GM12878 (cell line): ENCODE measurements at regions of chr1 and their contacts with region 1.

Region 1: GRCh38 chr1:36516372-36517325 is 33.9 kb upstream of the CSF3R start:
- DNase-seq: no peak
- ATAC-seq: peak; percentile 92
- H3K4me3 ChIP-seq: no peak overlapping the region
- H3K27ac ChIP-seq: no peak overlapping the region
- H3K4me1 ChIP-seq: no peaks in the 10 kb centered on the region
- H3K27me3 ChIP-seq: peaks cover 0 to 4% of the 10 kb centered on the region in 2 experiments; a peak in 3 of 4 replicates
- CTCF ChIP-seq: peak; percentile 81 to 87 (median 86)
- EP300 ChIP-seq: no peak
- POLR2A ChIP-seq: no peak
- RAD21 ChIP-seq: peak; percentile 78

Region 2: GRCh38 chr1:36457691-36458090 is 59.0 kb before region 1 on chr1:
- CTCF ChIA-PET with region 1: no interaction called
- POLR2A ChIA-PET with region 1: no interaction called
- RAD21 ChIA-PET with region 1: no interaction called
- SMC1A ChIA-PET with region 1: no interaction called
- in situ Hi-C with region 1: no loop called
- intact Hi-C with region 1: no loop called
- DNase-seq: no peak
- ATAC-seq: no peak
- H3K4me3 ChIP-seq: no peak overlapping the region
- H3K27ac ChIP-seq: peak overlapping the region; percentile 4; the same call in 1 of the 2 replicates
- H3K4me1 ChIP-seq: peaks cover 8% of the 10 kb centered on the region
- H3K27me3 ChIP-seq: no peaks in the 10 kb centered on the region
- CTCF ChIP-seq: no peak
- EP300 ChIP-seq: no peak
- POLR2A ChIP-seq: no peak
- RAD21 ChIP-seq: no peak

Region 3: GRCh38 chr1:36534711-36535412 is 18.2 kb after region 1 on chr1:
- CTCF ChIA-PET with region 1: interaction called, 19 read pairs
- POLR2A ChIA-PET with region 1: no interaction called
- RAD21 ChIA-PET with region 1: no interaction called
- SMC1A ChIA-PET with region 1: no interaction called
- in situ Hi-C with region 1: no loop called
- intact Hi-C with region 1: no loop called
- DNase-seq: no peak
- ATAC-seq: no peak
- H3K4me3 ChIP-seq: no peak overlapping the region
- H3K27ac ChIP-seq: no peak overlapping the region
- H3K4me1 ChIP-seq: no peaks in the 10 kb centered on the region
- H3K27me3 ChIP-seq: no peaks in the 10 kb centered on the region
- CTCF ChIP-seq: no peak
- EP300 ChIP-seq: no peak
- POLR2A ChIP-seq: no peak
- RAD21 ChIP-seq: no peak

Region 4: DNA sequence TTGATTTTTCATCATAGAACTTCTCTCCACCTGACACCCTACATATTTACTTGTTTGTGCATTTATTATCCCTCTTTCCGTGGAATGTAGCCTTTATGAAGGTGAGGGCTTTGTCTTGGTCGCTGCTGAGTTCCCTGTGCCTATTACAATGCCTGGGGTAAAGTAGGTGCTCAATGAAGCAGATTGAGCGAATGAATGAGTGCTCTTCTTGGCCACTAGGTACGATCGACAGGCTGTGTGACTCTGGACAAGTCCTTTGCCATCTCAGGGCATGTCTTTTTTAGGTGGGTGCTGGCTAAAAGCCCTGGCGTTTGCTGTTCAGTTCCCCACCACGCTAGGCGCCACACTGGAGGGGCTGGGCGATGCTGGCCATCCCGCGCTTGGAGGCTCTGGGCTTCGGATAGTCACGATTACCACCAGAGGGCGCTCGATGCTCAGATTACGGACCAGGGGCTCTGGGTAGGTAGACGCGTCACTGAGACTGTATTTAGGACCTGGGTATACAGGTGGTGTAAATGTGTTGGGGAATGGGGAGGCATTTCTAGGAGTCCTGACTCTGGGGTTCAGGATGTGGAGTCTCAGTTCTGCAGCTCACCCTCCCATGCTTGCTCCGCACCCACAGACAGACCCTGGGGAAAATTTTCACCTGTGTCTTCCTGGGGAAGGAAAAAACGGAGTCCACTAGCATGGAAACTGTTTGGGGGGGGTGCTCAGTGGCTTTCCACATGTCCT is 37.1 kb after region 1 on chr1:
- CTCF ChIA-PET with region 1: interaction called, 11 read pairs
- POLR2A ChIA-PET with region 1: no interaction called
- RAD21 ChIA-PET with region 1: no interaction called
- SMC1A ChIA-PET with region 1: no interaction called
- in situ Hi-C with region 1: no loop called
- intact Hi-C with region 1: no loop called
- DNase-seq: no peak
- ATAC-seq: peak; percentile 97
- H3K4me3 ChIP-seq: no peak overlapping the region
- H3K27ac ChIP-seq: no peak overlapping the region
- H3K4me1 ChIP-seq: no peaks in the 10 kb centered on the region
- H3K27me3 ChIP-seq: no peaks in the 10 kb centered on the region
- CTCF ChIP-seq: peak; percentile 75
- EP300 ChIP-seq: no peak
- POLR2A ChIP-seq: no peak
- RAD21 ChIP-seq: peak; percentile 61

Region 5: GRCh38 chr1:36731226-36732014 is 214.8 kb after region 1 on chr1:
- CTCF ChIA-PET with region 1: no interaction called
- POLR2A ChIA-PET with region 1: no interaction called
- RAD21 ChIA-PET with region 1: no interaction called
- SMC1A ChIA-PET with region 1: no interaction called
- in situ Hi-C with region 1: no loop called
- intact Hi-C with region 1: no loop called
- DNase-seq: no peak
- ATAC-seq: 0 out of 3 replicates have a peak, but pooled peaks have one; percentile 18
- H3K4me3 ChIP-seq: no peak overlapping the region
- H3K27ac ChIP-seq: no peak overlapping the region
- H3K4me1 ChIP-seq: no peaks in the 10 kb centered on the region
- H3K27me3 ChIP-seq: peaks cover 1 to 2% of the 10 kb centered on the region in 2 experiments
- CTCF ChIP-seq: peak in 1 of 3 experiments; percentile 12; a peak in 2 of 6 replicates
- EP300 ChIP-seq: no peak
- POLR2A ChIP-seq: no peak
- RAD21 ChIP-seq: no peak